ENCODE measurements at regions of chr20 and their contacts with region 1.

Region 1: DNA sequence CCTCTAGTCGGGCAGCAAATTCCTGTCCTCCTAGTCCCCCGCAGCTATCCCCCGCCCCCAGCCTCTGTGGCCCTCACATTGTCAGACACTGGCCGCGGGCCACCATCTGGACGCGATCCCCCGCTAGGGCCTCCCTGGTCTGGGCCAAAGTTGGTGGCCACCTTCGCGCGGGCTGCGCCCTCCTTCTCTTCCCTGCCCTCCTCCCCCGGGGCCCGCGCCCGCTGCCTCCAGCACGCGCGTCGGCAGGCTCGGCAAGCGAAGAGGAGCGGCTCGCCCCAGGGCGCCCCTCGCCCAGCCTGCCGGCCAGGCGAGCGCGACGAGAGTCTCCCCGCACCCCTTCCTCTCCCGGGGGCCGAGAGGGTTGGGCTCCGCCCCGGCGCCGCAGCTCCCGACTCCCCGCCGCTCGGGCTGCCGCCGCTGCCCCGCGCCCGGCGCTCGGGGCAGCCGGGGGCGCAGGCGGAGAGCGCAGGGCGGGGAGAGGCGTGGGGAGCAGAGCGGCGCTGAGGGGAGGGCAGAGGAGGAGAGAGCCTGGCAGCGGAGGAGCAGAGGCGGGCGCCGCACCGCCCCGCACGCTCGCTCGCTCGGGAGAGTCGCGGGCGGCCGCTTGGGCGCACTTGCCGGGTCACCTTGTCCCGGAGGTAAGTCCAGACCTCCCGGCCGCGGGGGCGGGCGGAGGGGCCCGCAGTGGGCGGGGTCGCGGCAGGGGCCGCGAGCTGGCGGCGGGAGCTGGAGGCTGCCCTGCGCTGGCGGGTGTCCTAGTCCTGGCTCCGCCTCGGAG is at the start of gene SYNDIG1:
- DNase-seq: peak; percentile 20
- H3K4me3 ChIP-seq: peak within 1 kb of the TSS; percentile 37 to 51 (median 48)
- H3K27ac ChIP-seq: no peak within 1 kb of the TSS
- H3K4me1 ChIP-seq: no peaks in the 10 kb centered on the region
- H3K27me3 ChIP-seq: no peaks in the 10 kb centered on the region
- CTCF ChIP-seq: no peak
- total RNA-seq, gene SYNDIG1: 5.7 to 17.5 TPM

Region 2: GRCh38 chr20:24160563-24161375 is 308.5 kb before region 1 on chr20:
- CTCF ChIA-PET with region 1: no interaction called
- dilution Hi-C with region 1: no loop called
- in situ Hi-C with region 1: no loop called
- intact Hi-C with region 1: loop called (anchors 5 kb)
- DNase-seq: peak; percentile 43
- H3K4me3 ChIP-seq: no peak overlapping the region
- H3K27ac ChIP-seq: no peak overlapping the region
- H3K4me1 ChIP-seq: no peaks in the 10 kb centered on the region
- H3K27me3 ChIP-seq: no peaks in the 10 kb centered on the region
- CTCF ChIP-seq: peak; percentile 60 to 79

Region 3: GRCh38 chr20:24337069-24337468 is 132.2 kb before region 1 on chr20:
- CTCF ChIA-PET with region 1: no interaction called
- dilution Hi-C with region 1: no loop called
- in situ Hi-C with region 1: no loop called
- intact Hi-C with region 1: loop called (anchors 10 kb)
- DNase-seq: peak; percentile 90
- H3K4me3 ChIP-seq: no peak overlapping the region
- H3K27ac ChIP-seq: peak overlapping the region; percentile 17
- H3K4me1 ChIP-seq: peaks cover 68% of the 10 kb centered on the region
- H3K27me3 ChIP-seq: no peaks in the 10 kb centered on the region
- CTCF ChIP-seq: no peak

Region 4: DNA sequence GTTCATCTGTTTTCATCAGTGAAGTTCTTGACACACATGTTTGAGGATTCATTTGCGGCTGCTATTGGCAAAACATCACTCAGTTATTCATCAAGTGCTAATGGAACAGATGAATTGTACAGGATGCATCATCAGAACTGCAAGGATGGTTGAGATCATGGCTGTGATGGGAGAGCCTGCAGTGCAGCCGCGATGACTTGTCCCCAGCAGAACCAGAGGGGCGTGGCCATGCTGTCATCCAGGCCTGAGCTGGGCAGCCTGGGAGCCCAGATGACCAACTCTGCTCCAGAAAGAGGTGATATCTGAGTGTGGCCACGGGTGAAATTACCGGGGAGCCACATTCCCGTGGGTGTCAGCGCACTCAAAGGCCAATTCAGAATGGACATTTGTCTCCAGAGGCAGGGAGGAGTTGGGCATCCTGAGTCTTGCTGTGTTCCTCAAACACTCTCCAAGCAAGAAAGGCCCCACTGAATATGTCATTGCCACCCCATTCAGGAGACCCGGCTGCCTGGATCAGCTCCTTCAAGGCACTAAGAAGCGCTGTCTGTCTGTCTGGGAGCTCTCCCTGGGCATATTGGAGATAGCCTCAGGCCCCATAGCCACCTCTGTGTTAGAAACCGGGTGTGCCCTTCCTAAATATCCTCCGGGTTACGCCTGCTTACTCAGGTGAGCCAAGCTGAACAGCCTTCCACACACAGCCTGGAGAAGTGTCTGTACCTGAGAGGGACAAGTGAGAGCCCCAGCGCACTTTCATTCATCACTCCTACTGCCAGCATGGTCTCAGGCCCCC is 66.8 kb after region 1 on chr20:
- CTCF ChIA-PET with region 1: no interaction called
- dilution Hi-C with region 1: no loop called
- in situ Hi-C with region 1: loop called in 1 of 2 experiments (anchors 10 kb)
- intact Hi-C with region 1: no loop called
- DNase-seq: peak; percentile 6
- H3K4me3 ChIP-seq: no peak overlapping the region
- H3K27ac ChIP-seq: no peak overlapping the region
- H3K4me1 ChIP-seq: no peaks in the 10 kb centered on the region
- H3K27me3 ChIP-seq: no peaks in the 10 kb centered on the region
- CTCF ChIP-seq: no peak

Region 5: GRCh38 chr20:24610341-24611115 is 141.2 kb after region 1 on chr20:
- CTCF ChIA-PET with region 1: interaction called, 5 read pairs
- dilution Hi-C with region 1: no loop called
- in situ Hi-C with region 1: no loop called
- intact Hi-C with region 1: loop called (anchors 5 kb)
- DNase-seq: peak; percentile 87
- H3K4me3 ChIP-seq: no peak overlapping the region
- H3K27ac ChIP-seq: no peak overlapping the region
- H3K4me1 ChIP-seq: peaks cover 23% of the 10 kb centered on the region
- H3K27me3 ChIP-seq: no peaks in the 10 kb centered on the region
- CTCF ChIP-seq: no peak

Measured in mammary epithelial cell (primary cell).